ENCODE measurements at regions of chr3 and their contacts with region 1.

Region 1: DNA sequence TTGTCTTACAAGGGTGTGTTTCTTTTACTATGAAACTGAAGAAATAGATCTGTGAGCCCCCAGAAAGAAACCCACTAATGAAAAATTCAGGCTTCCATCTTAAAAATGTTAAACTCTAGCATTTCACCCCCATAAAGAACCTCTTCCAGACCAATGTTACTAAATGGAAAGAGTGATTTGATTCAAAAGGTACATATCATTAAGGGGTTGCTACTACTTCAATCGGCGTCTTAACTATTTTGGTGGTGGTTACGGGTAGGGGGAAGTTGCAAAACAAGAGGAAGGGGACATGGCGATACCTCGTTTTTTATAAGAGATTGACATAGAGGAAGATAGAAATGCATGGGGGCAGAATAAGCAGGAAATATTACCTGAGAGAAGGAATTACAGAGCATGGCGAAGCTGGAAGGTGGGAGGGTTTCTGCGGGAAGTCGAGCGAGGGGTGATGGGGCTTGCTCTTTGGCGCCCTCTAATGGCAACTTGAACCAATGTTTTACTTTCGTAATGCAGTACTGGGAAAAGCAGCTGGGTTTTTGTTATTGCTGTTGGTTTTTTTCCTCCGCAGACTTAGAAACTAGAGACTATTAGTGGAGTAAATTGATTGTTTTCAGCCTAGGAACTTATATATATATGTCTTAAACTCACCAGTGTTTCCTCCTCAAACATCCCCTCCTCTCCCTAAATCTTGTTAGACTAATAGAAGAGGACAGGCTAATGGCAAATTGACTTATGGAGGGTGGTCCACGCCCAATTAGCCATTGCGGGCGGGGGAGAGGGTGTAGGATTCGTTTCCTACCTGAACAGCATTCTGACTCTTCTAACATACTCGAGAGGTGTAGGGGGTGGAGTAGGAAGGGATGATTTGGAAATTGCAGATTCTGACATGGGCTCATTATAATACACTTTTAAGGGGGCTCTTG is 11.3 kb upstream of the SOX2 start:
- DNase-seq: peak; percentile 69
- ATAC-seq: peak; percentile 77
- H3K4me3 ChIP-seq: peak overlapping the region; percentile 30 to 51
- H3K27ac ChIP-seq: no peak overlapping the region
- H3K4me1 ChIP-seq: peaks cover 0 to 9% of the 10 kb centered on the region in 2 experiments; a peak in 2 of 4 replicates
- H3K27me3 ChIP-seq: no peaks in the 10 kb centered on the region; the same call in 1 of the 2 replicates
- CTCF ChIP-seq: peak; percentile 67 to 83 (median 81)
- POLR2A ChIP-seq: no peak
- RAD21 ChIP-seq: peak; percentile 70

Region 2: DNA sequence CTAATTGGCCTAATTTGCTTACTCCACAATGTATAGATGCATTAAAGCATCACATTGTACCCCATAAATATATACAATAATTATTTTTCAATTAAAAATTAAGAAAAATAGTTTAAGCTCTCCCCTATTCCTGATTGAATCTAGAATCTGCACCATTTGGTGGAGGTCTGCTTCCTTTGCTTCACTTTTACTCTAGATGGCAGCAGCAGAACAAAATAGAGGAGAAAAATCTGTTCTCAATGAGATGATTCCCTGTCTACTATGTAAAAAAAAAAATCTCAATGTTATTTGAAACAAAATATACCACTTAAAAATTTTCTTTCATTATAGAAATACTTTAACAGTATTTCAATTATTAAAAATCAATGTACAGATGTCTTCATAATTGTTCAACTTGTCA is 897.6 kb before region 1 on chr3:
- CTCF ChIA-PET with region 1: interaction called, 7 read pairs
- POLR2A ChIA-PET with region 1: no interaction called
- RAD21 ChIA-PET with region 1: no interaction called
- intact Hi-C with region 1: loop called (anchors 2 kb)
- DNase-seq: peak; percentile 3
- ATAC-seq: peak; percentile 49; the same call in 1 of the 2 replicates
- H3K4me3 ChIP-seq: no peak overlapping the region
- H3K27ac ChIP-seq: no peak overlapping the region
- H3K4me1 ChIP-seq: no peaks in the 10 kb centered on the region
- H3K27me3 ChIP-seq: peaks cover 16% of the 10 kb centered on the region; the same call in 1 of the 2 replicates
- CTCF ChIP-seq: peak; percentile 39 to 51 (median 48); a peak in 5 of 6 replicates
- POLR2A ChIP-seq: no peak
- RAD21 ChIP-seq: peak; percentile 69

Region 3: DNA sequence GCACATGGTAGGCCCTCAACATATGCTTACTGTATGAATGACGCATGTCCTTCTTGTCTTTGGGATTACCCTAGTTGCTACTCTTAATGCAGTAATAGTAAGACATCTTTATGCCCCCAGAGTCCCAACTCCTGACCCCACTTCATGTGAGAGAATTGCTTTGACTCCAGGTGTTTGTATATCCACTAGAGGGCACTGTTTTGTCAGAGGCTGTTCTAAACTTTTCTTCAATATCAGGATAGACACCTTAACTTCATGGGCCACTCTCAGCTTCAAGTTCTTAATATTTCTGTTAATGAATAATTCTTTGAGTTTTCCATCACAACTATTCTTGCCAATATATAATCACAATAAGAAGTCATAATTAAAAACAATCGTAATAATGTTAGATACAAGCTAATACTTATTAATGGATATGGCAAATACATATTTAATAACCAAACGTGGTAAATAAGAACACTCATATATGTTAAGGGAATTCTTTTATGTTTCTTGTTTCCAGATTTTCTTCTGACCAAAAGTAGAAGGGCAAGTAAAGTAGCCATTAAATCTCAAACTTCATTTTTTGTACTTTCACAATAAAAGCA is 373.7 kb before region 1 on chr3:
- CTCF ChIA-PET with region 1: interaction called, 31 read pairs
- POLR2A ChIA-PET with region 1: no interaction called
- RAD21 ChIA-PET with region 1: interaction called in 1 of 2 experiments, 4 read pairs
- intact Hi-C with region 1: loop called (anchors 1 kb)
- DNase-seq: peak; percentile 15
- ATAC-seq: peak; percentile 73; the same call in 1 of the 2 replicates
- H3K4me3 ChIP-seq: no peak overlapping the region
- H3K27ac ChIP-seq: no peak overlapping the region
- H3K4me1 ChIP-seq: no peaks in the 10 kb centered on the region
- H3K27me3 ChIP-seq: peaks cover 20% of the 10 kb centered on the region
- CTCF ChIP-seq: peak; percentile 34 to 75 (median 66); a peak in 5 of 6 replicates
- POLR2A ChIP-seq: no peak
- RAD21 ChIP-seq: peak; percentile 60

Region 4: GRCh38 chr3:181689546-181689945 is 10.9 kb before region 1 on chr3:
- CTCF ChIA-PET with region 1: interaction called, 15 read pairs
- POLR2A ChIA-PET with region 1: no interaction called
- RAD21 ChIA-PET with region 1: no interaction called
- intact Hi-C with region 1: no loop called
- DNase-seq: no peak
- ATAC-seq: no peak
- H3K4me3 ChIP-seq: no peak overlapping the region
- H3K27ac ChIP-seq: no peak overlapping the region
- H3K4me1 ChIP-seq: no peaks in the 10 kb centered on the region
- H3K27me3 ChIP-seq: no peaks in the 10 kb centered on the region
- CTCF ChIP-seq: no peak
- POLR2A ChIP-seq: no peak
- RAD21 ChIP-seq: no peak

Measured in HCT116 (cell line).